Right lobe of liver (tissue), 6 donors: ENCODE measurements at regions of chr16 and their contacts with region 1.

Region 1: GRCh38 chr16:361872-362701 is 8.3 kb downstream of the MRPL28 start:
- DNase-seq: peak; percentile 81 to 85 (median 84)
- ATAC-seq: peak; percentile 85 to 95 (median 91)
- H3K4me3 ChIP-seq: no peak overlapping the region
- H3K27ac ChIP-seq: no peak overlapping the region
- H3K4me1 ChIP-seq: no peaks in the 10 kb centered on the region
- H3K27me3 ChIP-seq: no peaks in the 10 kb centered on the region
- CTCF ChIP-seq: peak; percentile 64 to 82 (median 80)
- POLR2A ChIP-seq: no peak

Region 2: GRCh38 chr16:234468-235305 is 127.4 kb before region 1 on chr16 and contains the start of gene FAM234A:
- intact Hi-C with region 1: loop called in 1 of 2 experiments (anchors 10 kb)
- DNase-seq: peak; percentile 96 to 97 (median 97)
- ATAC-seq: peak; percentile 95 to 99 (median 96)
- H3K4me3 ChIP-seq: peak within 1 kb of the TSS; percentile 69 to 91 (median 87)
- H3K27ac ChIP-seq: peak within 1 kb of the TSS; percentile 89 to 96 (median 92)
- H3K4me1 ChIP-seq: peaks cover 0 to 5% (median 0%) of the 10 kb centered on the region in 4 donors
- H3K27me3 ChIP-seq: no peaks in the 10 kb centered on the region
- CTCF ChIP-seq: peak; percentile 29 to 44 (median 34)
- POLR2A ChIP-seq: peak; percentile 97
- total RNA-seq, gene FAM234A: 31.7 to 64.8 (median 41.9) TPM